Naive thymus-derived CD4-positive, alpha-beta T cell (primary cell): ENCODE measurements at regions of chr12 and their contacts with region 1.

Region 1: GRCh38 chr12:22631863-22632463 is 7.0 kb downstream of the ETNK1 start:
- DNase-seq: peak in 5 of 9 donors; percentile 25 to 41 (median 30)
- ATAC-seq: peak; percentile 63
- H3K4me3 ChIP-seq: no peak overlapping the region
- H3K4me3 Mint-ChIP-seq: peak overlapping the region in 1 of 10 donors; percentile 10
- H3K27ac ChIP-seq: no peak overlapping the region
- H3K27ac Mint-ChIP-seq: peak overlapping the region in 3 of 9 donors; percentile 4 to 26 (median 22)
- H3K4me1 ChIP-seq: peaks cover 25 to 27% of the 10 kb centered on the region in 2 donors
- H3K4me1 Mint-ChIP-seq: peaks cover 51 to 93% (median 86%) of the 10 kb centered on the region in 7 donors
- H3K27me3 ChIP-seq: no peaks in the 10 kb centered on the region
- H3K27me3 Mint-ChIP-seq: no peaks in the 10 kb centered on the region

Region 2: GRCh38 chr12:21690704-21691368 is 941.1 kb before region 1 on chr12:
- CTCF ChIA-PET with region 1: no interaction called
- POLR2A ChIA-PET with region 1: no interaction called
- intact Hi-C with region 1: loop called in 1 of 2 experiments (anchors 5 kb)
- DNase-seq: peak in 6 of 9 donors; percentile 31 to 71 (median 50)
- ATAC-seq: peak; percentile 80
- H3K4me3 ChIP-seq: no peak overlapping the region
- H3K4me3 Mint-ChIP-seq: peak overlapping the region; percentile 0 to 67 (median 35)
- H3K27ac ChIP-seq: peak overlapping the region; percentile 40
- H3K27ac Mint-ChIP-seq: peak overlapping the region; percentile 14 to 88 (median 69)
- H3K4me1 ChIP-seq: peaks cover 3 to 22% of the 10 kb centered on the region in 2 donors
- H3K4me1 Mint-ChIP-seq: peaks cover 11 to 37% (median 27%) of the 10 kb centered on the region in 7 donors
- H3K27me3 ChIP-seq: no peaks in the 10 kb centered on the region
- H3K27me3 Mint-ChIP-seq: peaks cover 0 to 4% (median 0%) of the 10 kb centered on the region in 5 donors